ENCODE measurements at regions of chr2 and their contacts with region 1.

Region 1: GRCh38 chr2:160411955-160412354 is 81.7 kb downstream of the RBMS1 start:
- DNase-seq: no peak
- H3K4me3 ChIP-seq: no peak overlapping the region
- H3K27ac ChIP-seq: no peak overlapping the region
- H3K4me1 ChIP-seq: peaks cover 12 to 28% (median 23%) of the 10 kb centered on the region in 4 experiments
- H3K27me3 ChIP-seq: no peaks in the 10 kb centered on the region

Region 2: DNA sequence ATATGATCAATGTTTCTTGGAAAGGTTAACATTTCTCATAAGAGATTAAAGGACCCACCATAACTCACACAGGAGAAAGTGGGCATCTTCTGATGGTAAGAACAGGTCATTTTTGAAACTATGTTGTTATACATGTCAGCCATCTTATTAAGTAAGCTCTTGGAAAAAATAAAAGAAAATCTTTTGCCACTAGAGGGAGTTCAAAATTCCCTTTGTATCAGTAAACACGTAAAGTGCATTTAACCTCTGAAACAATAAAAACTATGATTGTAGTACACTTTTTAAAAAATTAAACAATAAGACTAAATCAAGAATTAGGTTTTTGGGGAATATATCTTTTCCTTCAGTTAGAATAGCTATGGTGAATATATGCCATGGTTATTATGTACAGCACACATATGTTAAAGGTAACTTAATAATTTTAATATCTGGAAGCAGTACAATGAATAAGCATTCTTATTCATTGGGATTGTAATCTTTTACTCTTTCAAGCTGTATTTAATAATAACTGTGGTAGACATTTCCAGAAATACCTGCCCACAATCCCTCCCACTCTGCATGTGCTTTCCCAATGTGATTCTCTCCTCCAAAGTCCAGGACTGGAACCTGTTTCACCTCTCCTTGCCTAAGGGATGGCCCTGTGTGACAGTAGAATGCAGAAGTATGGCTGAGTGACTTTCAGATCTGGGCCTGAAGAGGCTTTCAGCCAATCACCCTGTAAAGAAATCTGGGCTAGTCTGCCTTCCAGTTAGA is 17.5 kb after region 1 on chr2:
- CTCF ChIA-PET with region 1: interaction called, 24 read pairs
- POLR2A ChIA-PET with region 1: interaction called, 3 read pairs
- DNase-seq: peak; percentile 81 to 86 (median 81)
- H3K4me3 ChIP-seq: no peak overlapping the region
- H3K27ac ChIP-seq: no peak overlapping the region
- H3K4me1 ChIP-seq: peaks cover 6 to 31% (median 20%) of the 10 kb centered on the region in 4 experiments
- H3K27me3 ChIP-seq: no peaks in the 10 kb centered on the region

Measured in common myeloid progenitor, CD34-positive (primary cell).